ENCODE measurements at regions of chr10 and their contacts with region 1.

Region 1: GRCh38 chr10:28807760-28808613 is 130.7 kb downstream of the BAMBI start:
- DNase-seq: no peak
- ATAC-seq: peak; percentile 64
- H3K4me3 ChIP-seq: no peak overlapping the region
- H3K27ac ChIP-seq: peak overlapping the region; percentile 69 to 95
- H3K4me1 ChIP-seq: peaks cover 0 to 3% of the 10 kb centered on the region in 2 donors
- H3K27me3 ChIP-seq: no peaks in the 10 kb centered on the region

Region 2: DNA sequence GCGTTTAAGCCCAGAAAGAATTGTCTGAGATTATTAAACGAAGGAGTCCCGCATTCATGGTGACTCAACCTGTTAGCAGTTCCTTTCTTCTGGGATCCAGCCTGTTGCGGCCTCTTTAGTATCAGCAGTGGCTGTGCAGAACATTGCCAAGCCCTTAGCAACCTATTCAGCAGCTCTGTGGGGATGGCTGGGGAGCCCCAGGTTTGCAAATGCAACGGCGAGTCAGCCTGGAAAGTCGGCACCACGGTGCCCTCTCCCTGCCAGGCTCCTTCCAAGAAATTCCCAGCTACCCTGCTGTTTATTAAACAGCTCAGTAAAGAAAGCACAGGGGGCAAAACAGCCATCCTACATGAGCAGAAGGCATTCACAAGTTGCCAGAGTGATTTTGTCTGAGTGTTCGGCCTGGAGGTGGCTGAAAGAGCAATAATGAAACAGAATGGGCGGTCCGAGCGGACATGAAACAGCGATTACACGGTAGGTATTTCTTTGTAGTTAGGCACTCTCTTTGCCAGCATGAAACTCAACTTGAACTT is 67.6 kb after region 1 on chr10:
- intact Hi-C with region 1: loop called in 1 of 2 experiments (anchors 5 kb)
- DNase-seq: no peak
- ATAC-seq: no peak
- H3K4me3 ChIP-seq: no peak overlapping the region
- H3K27ac ChIP-seq: no peak overlapping the region
- H3K4me1 ChIP-seq: no peaks in the 10 kb centered on the region
- H3K27me3 ChIP-seq: no peaks in the 10 kb centered on the region

Region 3: DNA sequence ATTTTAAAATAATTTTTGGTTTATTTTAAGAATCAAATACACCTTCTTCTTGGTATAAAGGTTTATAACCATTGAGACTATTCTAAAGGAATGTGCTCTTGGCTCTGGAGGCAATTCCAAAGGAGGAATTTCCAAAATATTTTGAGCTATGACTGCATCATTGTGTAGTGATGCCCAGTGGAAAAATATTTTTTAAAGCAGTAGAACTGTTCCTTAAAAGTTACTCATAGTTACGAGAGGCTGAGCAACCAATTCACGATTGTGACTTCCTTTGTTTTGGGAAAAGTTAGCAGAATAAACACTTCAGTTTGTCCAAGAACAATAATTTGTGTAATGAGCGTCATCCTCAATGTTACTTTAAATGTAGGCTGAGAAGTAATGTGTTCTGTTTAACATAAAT is 103.0 kb after region 1 on chr10:
- intact Hi-C with region 1: no loop called
- DNase-seq: no peak
- ATAC-seq: peak; percentile 76
- H3K4me3 ChIP-seq: no peak overlapping the region
- H3K27ac ChIP-seq: peak overlapping the region in 1 of 2 donors; percentile 93
- H3K4me1 ChIP-seq: peaks cover 1 to 15% of the 10 kb centered on the region in 2 donors
- H3K27me3 ChIP-seq: no peaks in the 10 kb centered on the region

Region 4: DNA sequence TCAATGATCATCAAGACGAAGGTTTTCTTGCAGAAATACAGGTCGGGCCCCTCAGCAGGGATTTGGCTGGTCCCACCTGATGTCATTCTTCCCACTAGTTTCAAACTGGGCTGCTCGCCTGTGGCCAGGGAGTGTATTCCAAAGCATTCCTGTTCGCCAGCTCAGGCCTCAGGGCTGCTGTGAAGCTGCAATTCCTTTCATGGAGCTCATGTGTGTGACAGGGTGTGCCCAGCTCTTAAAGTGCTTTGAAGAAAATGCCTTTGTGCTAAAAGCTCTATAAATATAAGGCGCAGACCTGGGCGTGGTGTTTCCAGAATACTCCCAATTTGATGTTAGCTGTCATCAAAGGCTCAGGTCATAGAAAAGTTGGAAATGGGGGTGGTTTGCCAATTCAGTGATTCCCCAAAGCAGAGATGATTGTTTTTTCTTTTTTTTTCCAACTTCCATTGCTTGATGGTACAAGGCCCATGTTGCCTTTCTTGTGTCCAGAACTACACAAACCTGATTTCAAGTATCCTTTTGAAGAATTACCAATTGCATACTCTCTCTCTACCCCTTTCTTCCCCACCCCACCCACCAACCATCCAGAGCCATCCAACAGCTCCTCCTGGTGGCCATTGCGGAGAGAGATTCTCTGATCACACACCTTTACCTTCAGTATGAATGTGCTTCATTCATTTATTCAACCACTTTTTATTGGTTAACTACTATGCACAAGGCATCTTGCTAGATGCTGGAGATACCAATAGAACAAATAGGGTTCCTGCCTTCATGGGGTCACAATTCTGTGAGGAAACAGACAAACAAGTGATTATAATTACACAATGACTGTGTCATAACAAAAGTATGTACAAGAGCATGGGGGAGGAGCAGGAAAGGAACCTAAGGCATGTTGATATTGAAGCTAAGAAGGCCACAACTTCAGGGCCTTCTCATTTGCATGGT is 183.6 kb after region 1 on chr10:
- intact Hi-C with region 1: loop called (anchors 5 to 10 kb)
- DNase-seq: peak; percentile 80 to 86
- ATAC-seq: peak; percentile 74
- H3K4me3 ChIP-seq: no peak overlapping the region
- H3K27ac ChIP-seq: peak overlapping the region in 1 of 2 donors; percentile 17
- H3K4me1 ChIP-seq: no peaks in the 10 kb centered on the region
- H3K27me3 ChIP-seq: no peaks in the 10 kb centered on the region

Region 5: GRCh38 chr10:29160110-29160669 is 352.2 kb after region 1 on chr10:
- intact Hi-C with region 1: no loop called
- DNase-seq: no peak
- ATAC-seq: no peak
- H3K4me3 ChIP-seq: no peak overlapping the region
- H3K27ac ChIP-seq: no peak overlapping the region
- H3K4me1 ChIP-seq: no peaks in the 10 kb centered on the region
- H3K27me3 ChIP-seq: peaks cover 0 to 3% of the 10 kb centered on the region in 2 donors